ENCODE measurements at regions of chr6 and their contacts with region 1.

Region 1: DNA sequence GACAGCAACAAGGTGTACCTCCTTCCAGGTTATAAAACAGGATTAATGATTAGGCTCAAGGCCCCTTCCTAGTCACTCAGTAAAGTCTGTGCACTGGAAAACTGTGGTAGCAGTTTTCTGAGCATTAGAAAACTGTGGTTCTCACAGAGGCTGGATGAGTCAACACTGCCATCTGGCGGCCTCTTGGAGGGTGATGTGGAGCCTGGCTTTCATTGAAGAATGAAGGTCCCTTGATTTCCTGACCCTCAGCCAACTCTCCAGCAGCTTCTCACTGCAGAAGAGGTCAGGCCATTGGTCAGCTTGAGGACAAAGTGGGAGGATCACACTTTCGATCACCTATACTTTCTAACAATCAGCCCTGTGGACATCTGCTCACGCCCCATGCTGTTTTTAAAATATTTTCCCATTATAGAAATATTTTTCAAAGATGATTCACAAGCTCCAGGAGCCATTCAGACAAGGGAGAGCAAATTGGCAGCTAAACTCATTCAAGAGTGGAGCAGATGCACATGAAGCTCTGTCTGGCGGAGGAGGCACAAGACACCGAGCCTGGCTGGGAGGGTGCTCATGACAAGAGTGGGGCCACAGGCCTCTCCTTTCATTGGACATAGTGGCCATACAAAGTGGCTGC is 23.2 kb downstream of the PSMB1 start:
- DNase-seq: peak; percentile 70
- H3K4me3 ChIP-seq: no peak overlapping the region
- H3K27ac ChIP-seq: no peak overlapping the region
- H3K4me1 ChIP-seq: no peaks in the 10 kb centered on the region
- H3K27me3 ChIP-seq: no peaks in the 10 kb centered on the region
- CTCF ChIP-seq: peak; percentile 79

Region 2: GRCh38 chr6:169789982-169790927 is 739.7 kb before region 1 on chr6:
- intact Hi-C with region 1: loop called (anchors 10 kb)
- DNase-seq: peak; percentile 83
- H3K4me3 ChIP-seq: peak overlapping the region; percentile 33
- H3K27ac ChIP-seq: peak overlapping the region; percentile 59
- H3K4me1 ChIP-seq: peaks cover 7% of the 10 kb centered on the region
- H3K27me3 ChIP-seq: no peaks in the 10 kb centered on the region
- CTCF ChIP-seq: peak; percentile 98

Region 3: DNA sequence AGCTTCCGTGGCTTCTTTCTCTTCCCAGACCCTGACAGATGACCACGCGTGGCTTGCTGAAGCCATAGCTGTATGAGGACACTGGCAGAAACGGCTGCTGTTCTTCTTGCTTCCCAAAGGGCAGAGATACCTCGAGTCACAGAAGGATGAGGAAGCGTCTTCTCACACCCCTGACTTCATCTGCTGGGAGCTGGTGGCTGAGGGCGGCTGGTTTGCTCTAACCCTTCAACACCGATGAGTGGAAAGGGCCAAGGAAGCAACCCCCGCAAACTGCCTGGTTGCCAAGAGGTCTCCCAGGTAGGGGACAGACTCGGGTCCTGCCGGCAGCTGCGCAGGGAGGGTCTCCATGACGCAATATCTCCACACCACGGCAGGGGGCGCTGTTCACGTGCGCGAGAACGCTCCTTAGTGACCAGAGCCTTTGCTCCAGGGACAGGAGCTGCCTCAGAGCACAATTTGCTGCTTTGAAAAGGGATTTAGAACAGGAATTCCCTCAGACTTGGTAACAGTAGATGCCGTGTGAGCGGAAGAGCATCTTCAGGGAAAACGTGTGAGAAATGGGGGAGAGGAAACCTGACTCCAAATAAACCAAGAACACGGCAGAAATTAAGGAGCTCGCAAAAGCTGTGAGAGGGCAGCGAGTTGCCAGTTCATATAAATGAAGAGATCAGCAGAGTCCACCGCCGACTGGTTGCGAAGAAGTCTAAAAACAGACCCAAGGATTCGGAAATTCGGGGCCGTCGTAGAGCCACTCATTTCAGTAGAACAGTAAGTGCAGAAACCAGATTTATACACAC is 698.3 kb before region 1 on chr6:
- intact Hi-C with region 1: loop called (anchors 5 kb)
- DNase-seq: peak; percentile 73
- H3K4me3 ChIP-seq: no peak overlapping the region
- H3K27ac ChIP-seq: no peak overlapping the region
- H3K4me1 ChIP-seq: no peaks in the 10 kb centered on the region
- H3K27me3 ChIP-seq: no peaks in the 10 kb centered on the region
- CTCF ChIP-seq: peak; percentile 89

Region 4: GRCh38 chr6:170584181-170584953 is 54.4 kb after region 1 on chr6 and contains the start of gene PDCD2:
- intact Hi-C with region 1: no loop called
- DNase-seq: peak; percentile 95
- H3K4me3 ChIP-seq: peak within 1 kb of the TSS; percentile 93
- H3K27ac ChIP-seq: peak within 1 kb of the TSS; percentile 81
- H3K4me1 ChIP-seq: peaks cover 6% of the 10 kb centered on the region
- H3K27me3 ChIP-seq: no peaks in the 10 kb centered on the region
- CTCF ChIP-seq: no peak
- total RNA-seq, gene PDCD2: 46.7 to 61.5 TPM

Region 5: DNA sequence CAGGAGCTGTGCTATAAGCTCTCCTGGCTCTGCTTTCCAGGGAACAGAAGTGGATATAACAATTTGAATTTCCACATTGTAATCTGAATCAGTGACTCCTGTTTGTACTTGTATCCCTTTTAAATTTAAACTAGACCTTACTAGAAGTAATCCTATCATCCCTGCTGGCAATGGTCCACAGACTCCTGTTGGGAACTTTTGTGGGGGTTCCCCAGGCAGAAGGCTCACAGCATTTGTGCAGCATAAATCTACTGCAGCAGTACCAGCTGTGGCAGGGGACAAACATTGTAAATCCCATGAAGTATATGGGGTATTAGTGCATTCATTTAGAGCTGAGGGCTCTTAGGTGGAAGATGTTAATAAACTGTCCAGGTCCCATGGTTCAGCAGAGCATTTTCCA is 66.5 kb after region 1 on chr6:
- intact Hi-C with region 1: no loop called
- DNase-seq: no peak
- H3K4me3 ChIP-seq: no peak overlapping the region
- H3K27ac ChIP-seq: no peak overlapping the region
- H3K4me1 ChIP-seq: no peaks in the 10 kb centered on the region
- H3K27me3 ChIP-seq: peaks cover 3% of the 10 kb centered on the region
- CTCF ChIP-seq: no peak

Measured in colonic mucosa (tissue), 4 donors.